Sigmoid colon (tissue), 7 donors: ENCODE measurements at regions of chr20 and their contacts with region 1.

Region 1: DNA sequence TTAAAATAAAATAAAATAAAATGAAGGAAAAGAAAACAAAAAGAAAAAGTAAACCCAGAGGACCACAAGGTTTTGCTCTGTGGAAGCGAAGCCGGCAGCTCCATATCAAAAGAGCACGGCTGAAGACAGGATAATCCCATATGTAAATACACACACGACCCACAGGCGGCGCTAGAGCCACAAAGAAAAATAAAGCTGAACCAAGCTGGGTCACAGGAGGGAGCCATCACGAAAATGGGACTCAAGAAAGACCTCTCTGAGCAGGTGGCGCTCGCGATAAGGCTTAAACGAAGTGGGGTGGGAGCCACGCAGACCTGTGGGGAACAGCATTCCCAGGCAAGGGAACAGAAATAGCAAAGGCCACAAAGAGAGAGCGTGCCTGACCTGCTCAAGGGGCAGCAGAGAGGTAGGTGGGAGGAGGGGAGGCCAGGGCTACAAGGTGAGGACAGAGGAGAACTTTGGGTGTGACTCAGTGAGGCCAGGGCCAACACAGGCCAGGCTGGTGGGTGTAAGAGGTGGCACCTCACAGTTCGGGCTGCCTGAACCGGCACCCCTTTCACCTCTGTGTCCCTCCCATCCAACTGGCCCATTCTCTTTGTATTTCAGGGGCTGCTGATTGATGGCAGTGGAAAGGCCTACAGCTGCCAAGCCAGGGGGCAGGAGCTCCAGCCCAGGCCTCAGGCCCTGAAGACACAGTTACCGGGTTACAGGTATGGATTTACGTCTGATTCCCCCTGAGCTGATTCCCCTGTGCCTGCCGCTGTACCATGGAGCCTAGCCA is 26.0 kb downstream of the PTGIS start:
- DNase-seq: peak; percentile 78
- H3K4me3 ChIP-seq: no peak overlapping the region
- H3K27ac ChIP-seq: peak overlapping the region in 2 of 4 donors; percentile 20 to 52
- H3K4me1 ChIP-seq: peaks cover 0 to 6% (median 0%) of the 10 kb centered on the region in 4 donors
- H3K27me3 ChIP-seq: no peaks in the 10 kb centered on the region
- CTCF ChIP-seq: peak; percentile 76 to 95 (median 92)
- EP300 ChIP-seq: no peak
- POLR2A ChIP-seq: no peak

Region 2: DNA sequence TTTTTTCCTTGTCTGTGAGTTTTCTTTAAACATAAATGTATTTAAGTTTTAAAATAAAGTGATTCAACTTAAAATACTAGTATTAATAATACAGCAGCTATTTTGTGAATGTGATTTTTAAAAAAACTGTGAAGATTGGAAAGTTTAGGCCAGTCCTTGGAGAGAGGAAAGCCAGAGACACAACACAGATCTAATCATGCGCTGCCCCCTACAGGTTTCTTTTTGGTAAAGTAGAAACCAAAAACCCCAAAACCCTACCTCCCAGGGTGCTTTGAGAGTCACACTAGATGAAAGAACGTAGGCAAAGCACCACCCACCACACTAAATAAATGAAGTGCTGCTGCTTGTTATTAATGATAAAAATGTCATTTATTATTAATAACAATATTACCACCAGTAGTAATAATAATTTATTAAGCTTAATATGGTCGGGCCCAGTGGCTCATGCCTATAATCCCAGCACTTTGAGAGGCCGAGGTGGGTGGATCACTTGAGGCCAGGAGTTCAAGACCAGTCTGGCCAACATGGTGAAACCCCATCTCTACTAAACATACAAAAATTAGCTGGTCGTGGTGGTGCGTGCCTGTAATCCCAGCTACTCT is 304.4 kb after region 1 on chr20:
- intact Hi-C with region 1: loop called (anchors 5 kb)
- DNase-seq: no peak
- H3K4me3 ChIP-seq: no peak overlapping the region
- H3K27ac ChIP-seq: no peak overlapping the region
- H3K4me1 ChIP-seq: peaks cover 0 to 5% (median 2%) of the 10 kb centered on the region in 4 donors
- H3K27me3 ChIP-seq: no peaks in the 10 kb centered on the region
- CTCF ChIP-seq: peak; percentile 41 to 63 (median 56)
- EP300 ChIP-seq: no peak
- POLR2A ChIP-seq: no peak